ENCODE measurements at regions of chr1 and their contacts with region 1.

Region 1: DNA sequence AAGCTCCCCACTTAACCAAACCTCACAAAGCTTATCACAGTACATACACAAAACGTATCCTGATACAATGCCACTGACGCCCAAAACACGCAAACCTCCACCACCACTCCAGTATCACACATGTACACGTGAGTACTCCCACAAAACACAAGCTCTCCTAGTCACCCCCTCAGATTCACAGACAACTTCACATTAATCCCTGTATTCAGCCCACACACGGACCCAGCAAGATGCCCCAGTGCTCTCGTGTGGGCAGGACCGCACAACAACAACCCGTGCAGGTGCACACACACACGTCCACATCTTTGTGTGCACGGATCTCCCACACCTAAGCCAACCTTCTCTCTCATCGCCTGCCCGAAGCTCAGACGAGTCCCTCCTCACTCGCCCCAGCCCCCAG is 17.6 kb downstream of the PADI1 start:
- DNase-seq: no peak
- H3K4me3 ChIP-seq: no peak overlapping the region
- H3K27ac ChIP-seq: no peak overlapping the region
- H3K4me1 ChIP-seq: no peaks in the 10 kb centered on the region
- H3K27me3 ChIP-seq: no peaks in the 10 kb centered on the region
- CTCF ChIP-seq: no peak

Region 2: DNA sequence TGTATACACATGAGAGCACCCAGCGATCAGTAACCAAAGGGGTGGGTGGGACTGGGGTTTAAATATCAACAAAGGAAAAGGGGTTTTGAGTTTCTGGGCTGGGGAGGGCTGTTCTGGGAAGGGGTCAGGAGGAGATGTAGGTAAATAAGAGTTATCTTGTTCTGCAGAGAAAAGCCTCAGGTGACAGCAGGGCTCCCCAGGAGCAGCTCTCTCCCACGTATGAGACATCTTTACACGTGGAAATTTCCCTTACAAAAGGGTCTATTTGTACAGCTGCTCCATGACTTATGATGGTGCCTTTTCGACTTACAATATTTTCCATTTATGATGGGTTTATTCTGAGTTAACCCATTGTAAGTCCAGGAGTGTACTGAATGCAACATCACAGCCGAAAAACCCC is 87.0 kb before region 1 on chr1:
- intact Hi-C with region 1: loop called (anchors 5 kb)
- DNase-seq: no peak
- H3K4me3 ChIP-seq: no peak overlapping the region
- H3K27ac ChIP-seq: no peak overlapping the region
- H3K4me1 ChIP-seq: no peaks in the 10 kb centered on the region
- H3K27me3 ChIP-seq: no peaks in the 10 kb centered on the region
- CTCF ChIP-seq: no peak